ENCODE measurements at regions of chr11 and their contacts with region 1.

Region 1: DNA sequence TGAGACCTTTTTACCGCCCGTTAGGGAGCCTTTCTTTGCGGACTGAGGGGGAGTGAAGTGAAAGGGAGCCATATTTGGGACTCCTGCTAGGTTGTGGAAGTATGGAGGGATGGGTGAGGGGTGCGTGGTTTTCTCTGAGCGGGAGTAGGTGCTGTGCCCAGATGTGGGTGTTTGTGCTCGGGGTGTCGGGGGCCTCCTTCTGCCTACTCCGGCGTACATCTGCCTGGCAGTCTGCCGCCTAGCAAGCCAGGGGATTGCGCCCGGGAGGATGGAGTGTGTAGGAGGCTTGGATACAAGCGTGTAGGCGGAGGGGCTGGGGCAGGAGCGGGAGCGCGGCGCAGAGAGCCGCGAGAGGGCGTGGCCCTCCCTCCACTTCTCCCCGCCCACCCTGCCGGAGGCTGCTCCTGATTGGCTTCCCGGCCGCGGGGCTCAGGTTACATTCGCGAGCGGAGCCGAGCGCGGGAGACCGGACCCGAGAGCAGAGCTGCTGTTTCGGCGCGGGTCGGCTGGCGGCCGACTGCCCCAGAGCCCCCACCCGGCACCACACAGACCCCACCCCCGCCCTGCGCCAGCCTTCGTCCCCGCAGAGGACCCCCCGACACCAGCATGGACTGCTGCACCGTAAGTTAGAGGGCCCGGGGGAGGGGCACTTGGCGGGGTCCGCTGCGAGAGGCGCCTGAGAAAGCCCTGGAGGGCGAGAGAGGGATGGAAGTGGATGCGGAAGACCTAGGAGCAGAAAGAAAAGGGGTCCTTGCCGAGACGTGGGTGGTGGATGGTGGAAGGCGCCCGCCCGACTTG is at the start of gene NRGN:
- DNase-seq: peak; percentile 94 to 95
- H3K4me3 ChIP-seq: peak within 1 kb of the TSS; percentile 62 to 64
- H3K27ac ChIP-seq: peak within 1 kb of the TSS; percentile 34 to 66
- H3K4me1 ChIP-seq: peaks cover 0 to 44% (median 19%) of the 10 kb centered on the region in 4 donors
- H3K27me3 ChIP-seq: no peaks in the 10 kb centered on the region
- CTCF ChIP-seq: no peak

Region 2: GRCh38 chr11:124605719-124606118 is 134.0 kb before region 1 on chr11:
- intact Hi-C with region 1: no loop called
- DNase-seq: no peak
- H3K4me3 ChIP-seq: no peak overlapping the region
- H3K27ac ChIP-seq: no peak overlapping the region
- H3K4me1 ChIP-seq: no peaks in the 10 kb centered on the region
- H3K27me3 ChIP-seq: no peaks in the 10 kb centered on the region
- CTCF ChIP-seq: no peak

Region 3: DNA sequence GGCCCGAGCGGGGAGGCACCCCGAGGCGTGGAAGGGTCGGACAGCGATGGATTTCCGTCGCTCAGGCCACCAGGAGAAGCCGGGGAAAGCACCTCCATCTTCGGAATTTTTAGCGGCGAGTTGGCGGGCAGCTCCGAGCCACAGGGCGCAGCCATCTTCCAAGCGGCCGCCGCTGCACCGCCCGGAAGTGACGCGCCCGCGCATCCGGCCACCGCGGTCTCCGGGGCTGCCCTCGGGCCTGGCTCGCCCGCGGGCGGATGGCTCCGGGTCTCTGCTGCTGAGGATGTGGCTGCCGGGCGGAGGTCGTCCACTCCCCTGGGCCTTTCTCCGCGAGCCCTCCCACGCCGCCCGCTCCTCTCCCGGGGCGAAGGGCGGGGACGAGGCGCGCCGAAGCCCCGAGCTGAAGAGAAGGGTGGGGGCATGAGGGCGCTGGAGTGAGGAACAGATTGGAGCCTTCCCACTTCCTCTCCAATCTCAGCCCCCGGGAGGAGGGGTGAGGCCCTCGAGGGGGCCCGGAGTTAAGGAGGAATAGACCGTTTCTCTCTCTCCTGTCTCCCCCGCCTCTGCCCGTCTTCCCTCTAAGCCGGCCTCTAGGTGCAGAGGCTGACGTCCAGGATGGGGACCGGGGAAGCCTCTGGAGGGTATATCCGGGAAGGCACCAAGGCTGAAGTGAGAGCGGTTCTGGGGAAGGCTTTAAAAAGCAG is 60.7 kb after region 1 on chr11 and contains the start of gene MSANTD2:
- intact Hi-C with region 1: loop called (anchors 10 kb)
- DNase-seq: peak; percentile 79 to 88
- H3K4me3 ChIP-seq: peak within 1 kb of the TSS; percentile 98 to 100
- H3K27ac ChIP-seq: peak within 1 kb of the TSS; percentile 99
- H3K4me1 ChIP-seq: peaks cover 0 to 37% (median 21%) of the 10 kb centered on the region in 4 donors
- H3K27me3 ChIP-seq: no peaks in the 10 kb centered on the region
- CTCF ChIP-seq: no peak

Region 4: GRCh38 chr11:125675196-125675595 is 935.5 kb after region 1 on chr11:
- intact Hi-C with region 1: no loop called
- DNase-seq: no peak
- H3K4me3 ChIP-seq: no peak overlapping the region
- H3K27ac ChIP-seq: no peak overlapping the region
- H3K4me1 ChIP-seq: no peaks in the 10 kb centered on the region
- H3K27me3 ChIP-seq: no peaks in the 10 kb centered on the region
- CTCF ChIP-seq: no peak

Measured in tibial artery (tissue), 4 donors.